ENCODE measurements at regions of chrX and their contacts with region 1.

Region 1: GRCh38 chrX:138745196-138745595 is 33.7 kb upstream of the FGF13 start:
- DNase-seq: no peak
- H3K4me3 ChIP-seq: no peak overlapping the region
- H3K27ac ChIP-seq: no peak overlapping the region
- H3K4me1 ChIP-seq: no peaks in the 10 kb centered on the region
- H3K27me3 ChIP-seq: no peaks in the 10 kb centered on the region
- CTCF ChIP-seq: peak; percentile 25 to 71 (median 51)
- POLR2A ChIP-seq: no peak

Region 2: GRCh38 chrX:138128027-138128671 is 617.0 kb before region 1 on chrX:
- intact Hi-C with region 1: loop called (anchors 5 kb)
- DNase-seq: no peak
- H3K4me3 ChIP-seq: no peak overlapping the region
- H3K27ac ChIP-seq: no peak overlapping the region
- H3K4me1 ChIP-seq: no peaks in the 10 kb centered on the region
- H3K27me3 ChIP-seq: no peaks in the 10 kb centered on the region
- CTCF ChIP-seq: peak in 4 of 6 experiments; percentile 27 to 50 (median 37)
- POLR2A ChIP-seq: no peak

Measured in thyroid gland (tissue), 4 donors.